OCI-LY7 (cell line): ENCODE measurements at regions of chr12 and their contacts with region 1.

Region 1: DNA sequence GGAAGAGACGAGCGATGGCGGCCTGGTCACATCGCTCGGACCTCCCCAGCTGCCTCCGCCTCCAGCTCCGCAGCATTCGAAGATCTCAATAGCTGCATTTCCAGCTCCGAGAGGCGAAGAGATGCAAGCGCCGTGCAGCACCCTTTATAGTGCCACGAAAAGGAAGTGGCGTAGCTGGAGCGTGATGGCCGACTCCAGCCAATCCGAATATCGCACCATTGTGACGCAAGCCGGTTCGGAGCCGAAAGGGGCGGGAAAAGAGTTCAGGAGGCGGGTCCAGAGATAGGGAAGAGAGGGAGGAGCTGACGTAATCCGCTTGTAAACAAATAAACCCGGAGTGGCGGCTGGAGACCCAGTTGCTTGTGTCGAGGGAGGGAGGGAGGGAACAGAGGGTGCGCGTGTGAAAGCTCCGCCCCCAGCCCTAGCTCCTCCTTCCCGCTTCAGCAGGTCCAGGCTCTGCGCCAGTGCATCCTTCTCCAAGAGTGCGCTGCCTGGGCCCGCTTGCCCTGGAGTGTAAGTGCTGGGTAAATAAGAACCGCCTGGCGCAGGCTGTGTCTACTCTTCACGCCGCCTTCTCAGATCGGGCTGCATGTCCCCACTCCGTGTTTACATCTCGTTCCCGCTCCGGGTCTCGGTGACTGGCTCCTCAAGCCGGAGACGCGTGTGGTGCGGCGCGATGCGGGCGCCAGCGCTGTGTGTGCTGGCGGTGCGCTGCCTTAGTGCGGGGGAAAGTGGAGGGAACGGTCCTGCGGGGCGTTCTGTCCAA is at the start of gene BTG1:
- DNase-seq: peak; percentile 100
- H3K4me3 ChIP-seq: peak within 1 kb of the TSS; percentile 88
- H3K27ac ChIP-seq: peak within 1 kb of the TSS; percentile 73
- H3K4me1 ChIP-seq: peaks cover 16% of the 10 kb centered on the region
- CTCF ChIP-seq: no peak
- total RNA-seq, gene BTG1: 18.0 and 32.8 TPM in 2 replicates

Region 2: GRCh38 chr12:91811481-91812287 is 334.2 kb before region 1 on chr12:
- CTCF ChIA-PET with region 1: no interaction called
- POLR2A ChIA-PET with region 1: no interaction called
- intact Hi-C with region 1: loop called (anchors 5 kb)
- DNase-seq: peak; percentile 66
- H3K4me3 ChIP-seq: no peak overlapping the region
- H3K27ac ChIP-seq: no peak overlapping the region
- H3K4me1 ChIP-seq: no peaks in the 10 kb centered on the region
- CTCF ChIP-seq: peak; percentile 97

Region 3: DNA sequence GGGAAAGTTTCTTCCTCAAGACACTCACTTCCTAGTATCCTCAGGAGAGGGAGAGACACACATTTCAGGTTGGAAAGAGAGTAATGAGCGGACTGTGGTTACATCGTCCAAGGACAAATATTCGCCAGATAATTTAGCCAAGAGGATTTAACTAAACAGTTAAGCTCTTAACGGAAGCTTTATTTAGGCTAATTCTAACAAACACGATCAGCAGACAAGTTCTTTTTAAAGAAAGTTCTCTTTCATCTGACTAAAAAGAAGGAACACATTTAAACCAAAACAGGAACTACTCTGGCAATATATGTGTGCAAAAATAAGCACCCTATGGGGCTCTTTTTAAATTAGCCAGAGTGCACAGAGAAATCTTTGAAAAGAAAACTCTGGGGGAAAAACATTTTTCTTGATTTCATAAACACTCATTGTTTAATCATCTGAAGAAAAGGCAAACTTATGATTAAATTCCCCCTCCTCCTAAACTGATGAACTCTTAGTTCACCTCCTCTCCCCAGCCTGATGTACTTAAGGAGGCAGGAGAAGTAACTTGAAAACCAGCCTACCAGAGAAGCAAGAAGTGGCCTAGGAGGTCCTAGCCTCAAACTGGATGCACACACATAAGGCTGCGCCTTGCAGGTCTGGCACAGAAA is 13.0 kb after region 1 on chr12:
- CTCF ChIA-PET with region 1: interaction called, 3 read pairs
- POLR2A ChIA-PET with region 1: interaction called, 58 read pairs
- intact Hi-C with region 1: no loop called
- DNase-seq: peak; percentile 62
- H3K4me3 ChIP-seq: peak overlapping the region; percentile 57
- H3K27ac ChIP-seq: peak overlapping the region; percentile 77
- H3K4me1 ChIP-seq: peaks cover 45% of the 10 kb centered on the region
- CTCF ChIP-seq: no peak

Region 4: GRCh38 chr12:92408072-92408900 is 262.4 kb after region 1 on chr12:
- CTCF ChIA-PET with region 1: interaction called, 5 read pairs
- POLR2A ChIA-PET with region 1: interaction called, 27 read pairs
- intact Hi-C with region 1: loop called (anchors 1 kb)
- DNase-seq: peak; percentile 81
- H3K4me3 ChIP-seq: no peak overlapping the region
- H3K27ac ChIP-seq: peak overlapping the region; percentile 12
- H3K4me1 ChIP-seq: peaks cover 52% of the 10 kb centered on the region
- CTCF ChIP-seq: peak; percentile 93

Region 5: GRCh38 chr12:92472201-92472600 is 326.3 kb after region 1 on chr12:
- CTCF ChIA-PET with region 1: interaction called, 3 read pairs
- POLR2A ChIA-PET with region 1: interaction called, 33 read pairs
- intact Hi-C with region 1: loop called (anchors 1 kb)
- DNase-seq: no peak
- H3K4me3 ChIP-seq: peak overlapping the region; percentile 70
- H3K27ac ChIP-seq: peak overlapping the region; percentile 98
- H3K4me1 ChIP-seq: peaks cover 69% of the 10 kb centered on the region
- CTCF ChIP-seq: no peak

Region 6: DNA sequence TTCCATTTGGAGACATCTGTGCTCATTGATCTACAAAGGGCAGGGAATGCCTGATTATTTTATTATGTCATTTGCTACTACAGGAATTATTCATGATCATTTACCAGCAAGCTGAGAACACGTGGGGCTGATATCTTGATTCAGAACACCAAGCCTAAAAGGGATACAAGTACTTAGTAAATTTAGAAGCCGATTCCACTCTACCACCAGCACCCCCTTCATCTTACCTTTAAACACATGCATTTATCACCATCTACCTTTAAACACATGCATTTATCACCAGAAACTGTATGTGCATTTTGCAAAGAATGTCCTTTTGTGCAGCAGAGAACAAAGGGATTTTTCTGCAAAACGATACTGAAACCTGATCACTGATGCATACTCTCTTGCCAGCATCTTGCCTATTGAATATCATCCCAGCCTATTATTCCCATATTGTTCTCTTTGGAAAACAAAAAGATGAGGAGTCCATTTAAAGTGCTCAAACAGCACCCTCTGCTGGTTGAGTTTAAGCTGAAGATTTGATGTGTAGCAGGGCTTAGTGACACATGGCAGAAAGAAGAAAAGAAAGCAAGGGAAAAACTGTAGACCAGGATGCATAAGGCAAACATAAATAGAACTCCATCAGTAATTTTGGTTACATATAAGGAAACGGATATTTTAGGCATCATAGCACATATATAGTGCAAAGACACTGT is 424.3 kb after region 1 on chr12:
- CTCF ChIA-PET with region 1: no interaction called
- POLR2A ChIA-PET with region 1: interaction called, 10 read pairs
- intact Hi-C with region 1: loop called (anchors 1 kb)
- DNase-seq: peak; percentile 85
- H3K4me3 ChIP-seq: peak overlapping the region; percentile 22
- H3K27ac ChIP-seq: peak overlapping the region; percentile 26
- H3K4me1 ChIP-seq: peaks cover 40% of the 10 kb centered on the region
- CTCF ChIP-seq: peak; percentile 100